ENCODE measurements at regions of chr2 and their contacts with region 1.

Region 1: DNA sequence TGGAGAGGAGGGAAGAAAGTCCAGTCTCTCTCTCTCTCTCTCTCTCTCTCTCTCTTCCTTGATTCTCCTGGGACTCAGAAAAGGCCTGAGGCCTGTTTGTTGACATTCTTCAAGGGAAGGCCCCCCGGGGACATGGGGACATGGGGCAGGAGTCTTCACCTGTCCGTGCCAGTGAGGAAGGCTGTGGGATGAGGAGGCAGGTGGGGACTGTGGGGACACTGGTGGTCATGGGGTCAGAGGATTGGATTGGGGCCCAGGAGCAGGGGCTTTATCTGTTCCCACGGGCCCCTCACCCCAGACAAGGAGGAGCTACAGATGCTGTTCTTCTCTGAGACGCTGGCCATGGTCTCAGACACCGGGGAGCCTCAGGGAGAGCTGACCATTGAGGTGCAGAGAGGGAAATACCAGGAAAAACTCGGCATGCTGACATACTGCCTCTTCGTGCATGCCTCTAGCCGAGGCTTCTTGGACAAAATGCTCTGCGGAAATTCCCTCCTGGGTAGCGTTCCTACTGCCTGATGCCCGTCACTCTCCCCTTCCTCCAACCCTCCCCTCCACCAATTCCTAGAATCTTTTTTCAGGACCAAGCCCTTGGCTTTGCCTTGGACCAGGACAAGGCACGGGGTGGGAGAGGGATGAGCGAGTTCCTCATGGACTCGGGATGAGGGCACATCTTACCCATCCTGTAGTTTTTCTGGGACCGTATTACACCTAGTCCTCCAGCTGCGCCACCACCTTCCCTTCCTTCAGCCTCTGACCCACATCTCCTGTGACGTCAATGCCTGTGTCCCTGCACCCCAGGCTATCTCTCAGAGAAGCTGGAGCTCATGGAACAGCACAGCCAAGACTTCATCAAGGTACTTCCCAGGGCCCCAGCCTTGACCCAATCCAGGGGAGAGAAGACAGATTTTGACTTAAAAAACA is 841 bp downstream of the CATIP start:
- DNase-seq: peak in 1 of 2 donors; percentile 49
- H3K4me3 ChIP-seq: no peak overlapping the region
- H3K27ac ChIP-seq: peak overlapping the region in 3 of 5 donors; percentile 18 to 35 (median 19)
- H3K4me1 ChIP-seq: peaks cover 0 to 36% (median 23%) of the 10 kb centered on the region in 4 donors
- H3K27me3 ChIP-seq: no peaks in the 10 kb centered on the region
- CTCF ChIP-seq: no peak
- EP300 ChIP-seq: no peak
- POLR2A ChIP-seq: no peak

Region 2: GRCh38 chr2:218295029-218295428 is 62.5 kb before region 1 on chr2:
- intact Hi-C with region 1: loop called (anchors 5 kb)
- DNase-seq: peak in 1 of 2 donors; percentile 93
- H3K4me3 ChIP-seq: no peak overlapping the region
- H3K27ac ChIP-seq: peak overlapping the region; percentile 90 to 100 (median 99)
- H3K4me1 ChIP-seq: peaks cover 37 to 72% (median 61%) of the 10 kb centered on the region in 4 donors
- H3K27me3 ChIP-seq: no peaks in the 10 kb centered on the region
- CTCF ChIP-seq: no peak
- EP300 ChIP-seq: no peak
- POLR2A ChIP-seq: no peak

Region 3: GRCh38 chr2:218307415-218308090 is 49.9 kb before region 1 on chr2:
- intact Hi-C with region 1: no loop called
- DNase-seq: peak in 1 of 2 donors; percentile 22
- H3K4me3 ChIP-seq: no peak overlapping the region
- H3K27ac ChIP-seq: no peak overlapping the region
- H3K4me1 ChIP-seq: peaks cover 0 to 25% (median 10%) of the 10 kb centered on the region in 4 donors
- H3K27me3 ChIP-seq: no peaks in the 10 kb centered on the region
- CTCF ChIP-seq: no peak
- EP300 ChIP-seq: no peak
- POLR2A ChIP-seq: no peak